ENCODE measurements at regions of chr7 and their contacts with region 1.

Region 1: DNA sequence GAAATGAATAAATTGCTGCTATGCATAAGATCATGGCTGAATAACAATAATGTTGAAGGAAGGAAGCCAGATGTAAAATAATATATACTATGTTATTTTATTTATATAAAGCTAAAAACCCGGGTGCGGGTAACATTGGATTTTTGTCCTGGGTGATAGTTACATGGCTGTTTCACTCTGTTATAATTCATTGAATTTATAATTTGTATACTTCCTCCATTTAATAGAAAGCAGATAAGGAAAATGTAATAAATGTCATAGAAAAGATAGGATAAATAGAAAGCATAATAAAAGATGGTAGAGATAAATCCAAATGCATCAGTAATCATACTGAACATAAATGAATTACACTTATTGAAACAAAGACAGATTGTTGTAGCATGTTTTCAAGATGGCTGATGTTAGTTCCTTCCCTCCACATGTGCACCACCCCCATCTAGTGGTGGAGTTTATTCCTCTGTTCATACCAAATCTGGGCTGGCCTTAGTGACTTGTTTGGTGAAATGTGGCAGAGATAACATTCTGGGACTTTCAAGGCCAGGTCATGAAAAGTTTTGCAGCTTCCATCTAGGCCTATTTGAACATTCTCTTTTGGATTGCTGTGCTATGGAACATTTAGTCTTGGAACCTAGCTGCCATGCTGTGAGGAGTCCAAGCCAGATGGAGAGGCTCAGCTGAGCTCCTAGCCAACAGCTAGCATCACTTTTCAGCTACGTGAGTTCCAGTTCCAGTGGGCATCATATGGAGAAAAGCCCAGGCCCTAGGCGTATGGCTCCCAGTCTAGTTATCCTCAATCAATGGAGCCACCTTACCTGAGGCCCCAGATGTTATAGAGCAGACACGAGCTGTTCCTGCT is 46.9 kb downstream of the AHCYL2 start:
- DNase-seq: peak; percentile 71
- H3K4me3 Mint-ChIP-seq: peak overlapping the region; percentile 54
- H3K27ac Mint-ChIP-seq: no peak overlapping the region
- H3K4me1 Mint-ChIP-seq: peaks cover 6% of the 10 kb centered on the region
- H3K27me3 Mint-ChIP-seq: no peaks in the 10 kb centered on the region

Region 2: GRCh38 chr7:129210256-129210988 is 61.3 kb before region 1 on chr7:
- CTCF ChIA-PET with region 1: interaction called, 10 read pairs
- POLR2A ChIA-PET with region 1: no interaction called
- intact Hi-C with region 1: no loop called
- DNase-seq: peak; percentile 82
- H3K4me3 Mint-ChIP-seq: no peak overlapping the region
- H3K27ac Mint-ChIP-seq: no peak overlapping the region
- H3K4me1 Mint-ChIP-seq: no peaks in the 10 kb centered on the region
- H3K27me3 Mint-ChIP-seq: peaks cover 4% of the 10 kb centered on the region

Region 3: DNA sequence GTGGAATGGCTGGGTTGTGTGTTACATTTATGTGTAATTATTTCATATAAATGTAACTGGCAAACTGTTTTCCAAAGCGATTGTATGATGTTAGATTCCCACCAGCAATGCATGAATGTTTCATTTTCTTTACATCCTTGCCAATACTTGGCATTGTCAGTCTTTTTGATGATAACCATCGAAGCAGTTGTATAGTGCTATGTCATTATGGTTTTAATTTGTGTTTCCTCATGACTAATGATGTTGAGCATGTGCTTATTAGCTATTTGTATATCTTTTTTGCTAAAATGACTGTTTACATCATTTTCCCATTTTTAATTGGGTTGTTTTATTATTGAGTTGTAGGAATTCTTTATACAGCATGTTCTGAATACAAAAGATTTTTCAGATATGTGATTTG is 24.6 kb before region 1 on chr7:
- CTCF ChIA-PET with region 1: interaction called, 14 read pairs
- POLR2A ChIA-PET with region 1: no interaction called
- intact Hi-C with region 1: no loop called
- DNase-seq: no peak
- H3K4me3 Mint-ChIP-seq: no peak overlapping the region
- H3K27ac Mint-ChIP-seq: no peak overlapping the region
- H3K4me1 Mint-ChIP-seq: peaks cover 1% of the 10 kb centered on the region
- H3K27me3 Mint-ChIP-seq: no peaks in the 10 kb centered on the region

Region 4: GRCh38 chr7:129285111-129285510 is 13.4 kb after region 1 on chr7:
- CTCF ChIA-PET with region 1: interaction called, 18 read pairs
- POLR2A ChIA-PET with region 1: no interaction called
- intact Hi-C with region 1: no loop called
- DNase-seq: no peak
- H3K4me3 Mint-ChIP-seq: no peak overlapping the region
- H3K27ac Mint-ChIP-seq: no peak overlapping the region
- H3K4me1 Mint-ChIP-seq: no peaks in the 10 kb centered on the region
- H3K27me3 Mint-ChIP-seq: no peaks in the 10 kb centered on the region

Region 5: DNA sequence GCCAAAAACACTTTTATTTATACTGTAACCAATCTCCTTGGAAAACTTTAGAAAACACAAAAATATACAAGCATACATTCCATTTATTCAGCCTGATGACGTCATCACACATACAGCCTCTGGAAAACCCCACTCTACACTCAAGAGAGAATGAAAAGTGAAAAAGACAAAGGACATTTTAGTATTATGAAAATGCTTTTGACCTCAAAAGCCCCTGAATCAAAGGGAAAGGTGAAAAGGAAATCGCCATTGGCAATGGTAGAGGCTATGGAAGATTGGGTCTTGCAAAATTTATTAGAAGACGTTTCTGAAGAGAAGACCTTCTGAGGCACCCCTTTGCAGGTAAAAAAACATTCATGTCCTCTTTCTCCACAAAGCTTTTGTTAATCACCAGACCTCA is 79.6 kb after region 1 on chr7:
- CTCF ChIA-PET with region 1: no interaction called
- POLR2A ChIA-PET with region 1: no interaction called
- intact Hi-C with region 1: no loop called
- DNase-seq: no peak
- H3K4me3 Mint-ChIP-seq: no peak overlapping the region
- H3K27ac Mint-ChIP-seq: no peak overlapping the region
- H3K4me1 Mint-ChIP-seq: peaks cover 4% of the 10 kb centered on the region
- H3K27me3 Mint-ChIP-seq: no peaks in the 10 kb centered on the region